Caco-2 (cell line): ENCODE measurements at regions of chr14 and their contacts with region 1.

Region 1: GRCh38 chr14:93347850-93348249 is 868 bp downstream of the COX8C start:
- DNase-seq: no peak
- H3K4me3 ChIP-seq: no peak overlapping the region
- H3K4me3 Mint-ChIP-seq: no peak overlapping the region
- H3K27ac Mint-ChIP-seq: no peak overlapping the region
- H3K4me1 ChIP-seq: no peaks in the 10 kb centered on the region
- H3K4me1 Mint-ChIP-seq: no peaks in the 10 kb centered on the region
- H3K27me3 ChIP-seq: no peaks in the 10 kb centered on the region
- H3K27me3 Mint-ChIP-seq: no peaks in the 10 kb centered on the region
- CTCF ChIP-seq: no peak

Region 2: GRCh38 chr14:93317875-93318807 is 29.7 kb before region 1 on chr14:
- CTCF ChIA-PET with region 1: no interaction called
- POLR2A ChIA-PET with region 1: no interaction called
- intact Hi-C with region 1: loop called (anchors 2 kb)
- DNase-seq: no peak
- H3K4me3 ChIP-seq: no peak overlapping the region
- H3K4me3 Mint-ChIP-seq: no peak overlapping the region
- H3K27ac Mint-ChIP-seq: no peak overlapping the region
- H3K4me1 ChIP-seq: no peaks in the 10 kb centered on the region; the same call in none of the 2 replicates
- H3K4me1 Mint-ChIP-seq: peaks cover 10% of the 10 kb centered on the region
- H3K27me3 ChIP-seq: no peaks in the 10 kb centered on the region
- H3K27me3 Mint-ChIP-seq: no peaks in the 10 kb centered on the region
- CTCF ChIP-seq: no peak

Region 3: GRCh38 chr14:93493054-93493453 is 145.2 kb after region 1 on chr14:
- CTCF ChIA-PET with region 1: no interaction called
- POLR2A ChIA-PET with region 1: no interaction called
- intact Hi-C with region 1: no loop called
- DNase-seq: no peak
- H3K4me3 ChIP-seq: no peak overlapping the region
- H3K4me3 Mint-ChIP-seq: no peak overlapping the region
- H3K27ac Mint-ChIP-seq: no peak overlapping the region
- H3K4me1 ChIP-seq: no peaks in the 10 kb centered on the region
- H3K4me1 Mint-ChIP-seq: no peaks in the 10 kb centered on the region
- H3K27me3 ChIP-seq: no peaks in the 10 kb centered on the region
- H3K27me3 Mint-ChIP-seq: peaks cover 6% of the 10 kb centered on the region
- CTCF ChIP-seq: no peak